AG04450 (cell line): ENCODE measurements at regions of chr2 and their contacts with region 1.

Region 1: GRCh38 chr2:148218326-148219075 is 197.6 kb downstream of the MBD5 start:
- DNase-seq: no peak
- H3K4me3 ChIP-seq: no peak overlapping the region
- H3K27ac ChIP-seq: no peak overlapping the region
- H3K27me3 ChIP-seq: no peaks in the 10 kb centered on the region
- CTCF ChIP-seq: no peak

Region 2: GRCh38 chr2:148020111-148021058 is 198.1 kb before region 1 on chr2 and contains the start of gene ORC4:
- CTCF ChIA-PET with region 1: no interaction called
- POLR2A ChIA-PET with region 1: interaction called, 10 read pairs
- DNase-seq: peak; percentile 99
- H3K4me3 ChIP-seq: peak within 1 kb of the TSS; percentile 96
- H3K27ac ChIP-seq: peak within 1 kb of the TSS; percentile 78
- H3K27me3 ChIP-seq: no peaks in the 10 kb centered on the region
- CTCF ChIP-seq: peak; percentile 53
- polyA plus RNA-seq, gene ORC4: 27.0 and 49.7 TPM in 2 replicates

Region 3: GRCh38 chr2:148102641-148103040 is 115.9 kb before region 1 on chr2:
- CTCF ChIA-PET with region 1: no interaction called
- POLR2A ChIA-PET with region 1: no interaction called
- DNase-seq: no peak
- H3K4me3 ChIP-seq: no peak overlapping the region
- H3K27ac ChIP-seq: no peak overlapping the region
- H3K27me3 ChIP-seq: no peaks in the 10 kb centered on the region
- CTCF ChIP-seq: no peak